Activated CD8-positive, alpha-beta T cell treated with anti-CD3 and anti-CD28 coated beads for 36 hours (primary cell): ENCODE measurements at regions of chr12 and their contacts with region 1.

Region 1: DNA sequence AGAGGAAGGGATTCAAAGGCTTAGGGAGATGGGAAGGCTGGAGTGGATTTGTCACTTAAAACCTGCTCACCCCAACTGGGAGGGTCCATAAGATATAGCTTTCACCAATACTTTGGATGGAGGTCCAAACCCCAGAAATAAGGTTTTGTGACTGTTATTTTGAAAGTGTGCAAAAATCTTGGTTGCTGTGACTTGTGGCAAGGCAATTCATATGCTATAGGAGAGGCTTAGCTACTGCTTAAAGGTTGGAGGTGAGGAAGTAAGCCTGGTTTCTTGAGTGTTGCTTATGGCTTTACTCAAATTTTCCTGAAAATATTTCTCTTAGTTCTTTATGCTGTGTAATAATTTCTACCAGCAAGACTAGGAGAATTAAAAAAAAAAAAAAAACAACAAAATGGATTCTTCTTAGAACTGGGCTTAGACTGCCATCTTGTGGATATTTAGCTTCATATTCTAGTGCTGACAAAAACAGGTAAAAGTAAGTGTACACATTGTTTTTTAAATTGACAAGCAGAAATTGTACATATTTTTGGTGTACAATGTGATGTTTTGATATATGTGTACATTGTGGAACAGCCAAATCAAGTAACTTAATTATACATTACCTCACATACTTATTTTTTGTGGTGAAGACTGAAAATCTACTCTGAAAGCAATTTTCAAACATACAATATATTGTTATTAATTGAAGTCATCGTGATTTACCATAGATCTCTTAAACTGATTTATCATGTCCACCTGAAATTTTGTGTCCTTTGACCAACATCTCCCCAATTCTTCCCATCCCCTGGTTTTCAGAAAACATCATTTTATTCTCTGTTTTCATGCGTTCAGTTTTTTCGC is 23.0 kb downstream of the PDE6H start:
- DNase-seq: no peak
- ATAC-seq: peak; percentile 51
- H3K4me3 Mint-ChIP-seq: no peak overlapping the region
- H3K27ac Mint-ChIP-seq: peak overlapping the region; percentile 61
- H3K4me1 Mint-ChIP-seq: peaks cover 24% of the 10 kb centered on the region
- H3K27me3 Mint-ChIP-seq: no peaks in the 10 kb centered on the region
- CTCF ChIP-seq: peak; percentile 61

Region 2: DNA sequence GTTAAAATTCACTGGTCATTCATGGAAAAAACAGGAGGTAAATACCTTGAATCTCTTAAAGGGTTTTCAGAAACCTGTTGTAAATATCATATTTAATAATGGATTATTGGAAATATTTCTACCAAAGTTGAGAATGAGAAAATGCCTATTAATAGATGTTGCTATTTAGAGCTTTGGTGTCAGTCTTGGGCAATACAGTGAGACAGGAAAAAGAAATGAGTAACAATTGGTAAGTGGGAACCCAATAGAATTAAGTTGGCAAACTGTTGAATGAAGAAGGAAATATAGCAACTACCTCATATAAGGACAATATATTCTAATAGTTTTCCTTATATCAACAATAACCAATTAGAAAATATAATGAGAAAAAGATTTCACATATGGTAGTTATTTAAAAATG is 552.3 kb before region 1 on chr12:
- CTCF ChIA-PET with region 1: no interaction called
- POLR2A ChIA-PET with region 1: no interaction called
- intact Hi-C with region 1: no loop called
- DNase-seq: no peak
- ATAC-seq: no peak
- H3K4me3 Mint-ChIP-seq: no peak overlapping the region
- H3K27ac Mint-ChIP-seq: no peak overlapping the region
- H3K4me1 Mint-ChIP-seq: peaks cover 24% of the 10 kb centered on the region
- H3K27me3 Mint-ChIP-seq: no peaks in the 10 kb centered on the region
- CTCF ChIP-seq: no peak

Region 3: DNA sequence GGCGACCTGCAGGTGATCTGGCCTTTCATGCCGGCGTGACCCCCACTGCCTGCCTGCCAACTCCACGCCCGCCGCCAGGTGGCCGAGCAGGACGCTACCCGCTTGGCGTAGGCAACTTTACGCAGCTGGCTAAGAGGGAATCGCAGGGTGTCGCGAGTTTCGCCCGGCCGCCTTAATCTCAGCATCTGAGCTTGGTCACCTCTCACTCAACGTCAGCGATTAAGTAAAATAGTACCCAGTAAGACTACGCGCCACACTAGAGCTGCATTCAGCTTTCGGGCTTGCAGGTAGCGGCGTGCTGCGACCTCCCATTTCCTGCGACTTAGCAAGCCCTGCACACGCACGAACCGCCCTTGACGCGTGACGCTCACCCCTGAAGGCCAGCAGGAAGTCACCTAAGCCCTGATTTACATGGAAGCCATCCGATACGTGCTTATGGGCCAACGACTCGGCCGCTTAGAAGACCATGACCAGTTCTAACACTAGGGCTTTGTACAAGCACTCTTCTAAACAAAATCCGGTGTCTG is 225.8 kb before region 1 on chr12:
- CTCF ChIA-PET with region 1: interaction called, 13 read pairs
- POLR2A ChIA-PET with region 1: interaction called, 4 read pairs
- intact Hi-C with region 1: no loop called
- DNase-seq: peak; percentile 94
- ATAC-seq: peak; percentile 54
- H3K4me3 Mint-ChIP-seq: peak overlapping the region; percentile 95
- H3K27ac Mint-ChIP-seq: peak overlapping the region; percentile 99
- H3K4me1 Mint-ChIP-seq: peaks cover 33% of the 10 kb centered on the region
- H3K27me3 Mint-ChIP-seq: no peaks in the 10 kb centered on the region
- CTCF ChIP-seq: peak; percentile 66

Region 4: GRCh38 chr12:14810953-14811483 is 184.8 kb before region 1 on chr12:
- CTCF ChIA-PET with region 1: interaction called, 12 read pairs
- POLR2A ChIA-PET with region 1: no interaction called
- intact Hi-C with region 1: no loop called
- DNase-seq: no peak
- ATAC-seq: peak; percentile 13
- H3K4me3 Mint-ChIP-seq: no peak overlapping the region
- H3K27ac Mint-ChIP-seq: peak overlapping the region; percentile 38
- H3K4me1 Mint-ChIP-seq: peaks cover 14% of the 10 kb centered on the region
- H3K27me3 Mint-ChIP-seq: peaks cover 2% of the 10 kb centered on the region
- CTCF ChIP-seq: no peak

Region 5: DNA sequence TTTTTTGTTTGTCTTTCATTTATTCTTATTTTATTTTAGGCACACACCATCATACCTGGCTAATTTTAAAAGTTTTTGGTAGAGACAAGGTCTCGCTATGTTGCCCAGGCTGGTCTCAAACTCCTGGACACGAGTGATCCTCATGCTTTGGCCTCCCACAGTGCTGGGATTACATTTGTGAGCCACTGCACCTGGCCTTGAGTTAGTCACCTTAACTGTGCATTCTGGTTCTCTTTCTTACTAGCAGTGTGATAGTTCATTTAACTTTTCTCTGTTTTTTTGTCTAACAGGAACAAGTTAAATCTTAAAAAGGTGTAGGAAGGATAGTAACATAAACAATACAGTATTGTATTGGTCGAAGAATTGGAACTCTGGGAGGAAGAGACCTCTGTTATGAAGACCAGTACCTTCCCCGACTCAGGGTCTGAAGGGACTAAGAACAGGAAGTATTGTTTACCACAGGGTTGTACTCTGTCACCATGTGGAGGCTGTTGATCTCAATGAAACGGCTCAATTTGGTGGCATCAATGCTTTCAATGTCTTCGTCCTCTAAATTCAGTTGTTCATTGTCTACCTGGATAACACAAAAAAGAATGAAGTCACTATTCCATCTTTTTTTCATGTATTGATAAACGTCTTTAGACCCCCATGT is 75.2 kb before region 1 on chr12:
- CTCF ChIA-PET with region 1: interaction called, 11 read pairs
- POLR2A ChIA-PET with region 1: no interaction called
- intact Hi-C with region 1: no loop called
- DNase-seq: no peak
- ATAC-seq: peak; percentile 78
- H3K4me3 Mint-ChIP-seq: no peak overlapping the region
- H3K27ac Mint-ChIP-seq: peak overlapping the region; percentile 22
- H3K4me1 Mint-ChIP-seq: peaks cover 21% of the 10 kb centered on the region
- H3K27me3 Mint-ChIP-seq: no peaks in the 10 kb centered on the region
- CTCF ChIP-seq: no peak

Region 6: GRCh38 chr12:14948672-14949071 is 47.1 kb before region 1 on chr12:
- CTCF ChIA-PET with region 1: interaction called, 8 read pairs
- POLR2A ChIA-PET with region 1: interaction called, 3 read pairs
- intact Hi-C with region 1: loop called (anchors 5 kb)
- DNase-seq: peak; percentile 73
- ATAC-seq: peak; percentile 77
- H3K4me3 Mint-ChIP-seq: peak overlapping the region; percentile 68
- H3K27ac Mint-ChIP-seq: peak overlapping the region; percentile 97
- H3K4me1 Mint-ChIP-seq: peaks cover 84% of the 10 kb centered on the region
- H3K27me3 Mint-ChIP-seq: no peaks in the 10 kb centered on the region
- CTCF ChIP-seq: no peak